ENCODE measurements at regions of chr14 and their contacts with region 1.

Region 1: DNA sequence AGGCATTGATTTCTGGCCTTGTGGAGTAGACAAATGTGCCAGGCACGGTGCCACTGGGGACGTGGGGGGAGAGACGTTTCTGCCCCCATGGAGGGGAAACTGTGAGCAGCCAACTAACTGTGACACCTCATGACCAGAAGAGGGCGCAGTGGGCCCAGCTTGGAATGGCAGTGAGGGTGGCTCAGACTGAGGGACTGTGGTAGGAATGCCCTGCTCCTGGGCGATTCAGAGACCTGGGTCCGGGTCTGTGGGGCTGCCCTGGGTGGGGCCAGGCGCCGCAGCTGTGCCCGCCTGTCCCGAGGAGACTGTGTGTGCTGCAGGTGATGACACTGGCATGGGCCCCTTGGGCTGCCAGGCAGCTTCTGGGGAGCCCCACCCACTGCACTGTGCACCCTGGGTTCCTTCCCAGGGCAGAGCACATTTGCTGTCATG is 60.6 kb downstream of the SLC25A47 start:
- DNase-seq: peak; percentile 55
- ATAC-seq: peak; percentile 77
- H3K4me3 ChIP-seq: no peak overlapping the region
- H3K27ac ChIP-seq: no peak overlapping the region
- H3K4me1 ChIP-seq: peaks cover 26% of the 10 kb centered on the region
- H3K27me3 ChIP-seq: no peaks in the 10 kb centered on the region
- CTCF ChIP-seq: peak; percentile 79
- POLR2A ChIP-seq: no peak
- RAD21 ChIP-seq: peak; percentile 82

Region 2: GRCh38 chr14:100221533-100222223 is 162.1 kb before region 1 on chr14:
- CTCF ChIA-PET with region 1: no interaction called
- POLR2A ChIA-PET with region 1: no interaction called
- dilution Hi-C with region 1: no loop called
- in situ Hi-C with region 1: no loop called
- intact Hi-C with region 1: no loop called
- DNase-seq: peak; percentile 62
- ATAC-seq: peak; percentile 88
- H3K4me3 ChIP-seq: peak overlapping the region; percentile 57
- H3K27ac ChIP-seq: peak overlapping the region; percentile 59
- H3K4me1 ChIP-seq: peaks cover 18% of the 10 kb centered on the region
- H3K27me3 ChIP-seq: no peaks in the 10 kb centered on the region
- CTCF ChIP-seq: no peak
- POLR2A ChIP-seq: no peak
- RAD21 ChIP-seq: no peak

Region 3: GRCh38 chr14:100436745-100437406 is 53.1 kb after region 1 on chr14:
- CTCF ChIA-PET with region 1: no interaction called
- POLR2A ChIA-PET with region 1: no interaction called
- dilution Hi-C with region 1: no loop called
- in situ Hi-C with region 1: no loop called
- intact Hi-C with region 1: no loop called
- DNase-seq: no peak
- ATAC-seq: no peak
- H3K4me3 ChIP-seq: no peak overlapping the region
- H3K27ac ChIP-seq: no peak overlapping the region
- H3K4me1 ChIP-seq: peaks cover 23% of the 10 kb centered on the region
- H3K27me3 ChIP-seq: no peaks in the 10 kb centered on the region
- CTCF ChIP-seq: no peak
- POLR2A ChIP-seq: no peak
- RAD21 ChIP-seq: no peak

Region 4: DNA sequence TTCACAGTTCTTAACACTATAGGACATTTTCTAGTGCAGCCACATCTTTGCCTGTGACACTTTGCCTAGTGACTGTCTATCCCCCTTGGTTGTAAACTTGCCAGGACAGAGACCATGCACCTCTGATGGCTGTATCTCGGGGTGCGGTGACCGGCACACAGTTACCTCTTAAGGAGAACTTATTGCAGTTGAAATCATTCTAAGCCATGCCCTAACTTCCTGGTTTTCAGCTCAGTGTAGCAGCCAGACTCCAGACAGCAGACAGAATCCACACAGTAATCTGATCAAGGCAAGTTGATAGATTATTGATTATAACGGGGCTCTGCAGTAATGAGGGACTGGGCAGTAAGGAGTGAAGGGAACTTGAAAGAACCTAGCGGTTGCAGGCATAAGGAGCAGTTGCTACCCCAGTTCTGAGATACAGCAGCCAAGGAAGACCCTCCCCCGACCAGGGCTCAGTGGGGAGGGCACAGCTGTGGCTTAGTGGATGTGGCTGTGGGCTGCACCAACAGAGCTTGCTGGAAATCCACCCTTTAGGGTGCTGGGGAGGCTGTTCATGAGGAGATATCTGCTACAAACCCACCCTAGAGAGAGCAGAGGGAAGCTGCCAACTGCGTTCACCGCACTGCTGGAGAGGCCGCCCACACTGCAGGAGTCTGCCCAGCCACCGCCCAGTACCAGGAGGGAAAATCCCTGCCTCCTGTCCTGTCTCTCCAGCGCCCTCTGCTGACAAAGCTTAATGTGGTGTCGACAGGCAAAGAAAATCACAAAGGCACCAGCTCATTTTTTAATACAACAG is 261.6 kb after region 1 on chr14:
- CTCF ChIA-PET with region 1: interaction called, 26 read pairs
- POLR2A ChIA-PET with region 1: no interaction called
- dilution Hi-C with region 1: no loop called
- in situ Hi-C with region 1: no loop called
- intact Hi-C with region 1: loop called (anchors 1 kb)
- DNase-seq: peak; percentile 76
- ATAC-seq: peak; percentile 83
- H3K4me3 ChIP-seq: no peak overlapping the region
- H3K27ac ChIP-seq: no peak overlapping the region
- H3K4me1 ChIP-seq: peaks cover 8% of the 10 kb centered on the region; the same call in 1 of the 2 replicates
- H3K27me3 ChIP-seq: peaks cover 18% of the 10 kb centered on the region
- CTCF ChIP-seq: peak; percentile 82
- POLR2A ChIP-seq: no peak
- RAD21 ChIP-seq: peak; percentile 77

Region 5: GRCh38 chr14:100842799-100843198 is 459.1 kb after region 1 on chr14:
- CTCF ChIA-PET with region 1: interaction called, 3 read pairs
- POLR2A ChIA-PET with region 1: no interaction called
- dilution Hi-C with region 1: no loop called
- in situ Hi-C with region 1: loop called (anchors 10 kb)
- intact Hi-C with region 1: no loop called
- DNase-seq: peak; percentile 95
- ATAC-seq: peak; percentile 77
- H3K4me3 ChIP-seq: no peak overlapping the region
- H3K27ac ChIP-seq: peak overlapping the region; percentile 72; the same call in 1 of the 2 replicates
- H3K4me1 ChIP-seq: peaks cover 21% of the 10 kb centered on the region
- H3K27me3 ChIP-seq: no peaks in the 10 kb centered on the region
- CTCF ChIP-seq: no peak
- POLR2A ChIP-seq: no peak
- RAD21 ChIP-seq: peak; percentile 10; the same call in 1 of the 2 replicates

Region 6: GRCh38 chr14:101254805-101255764 is 871.3 kb after region 1 on chr14:
- CTCF ChIA-PET with region 1: no interaction called
- POLR2A ChIA-PET with region 1: no interaction called
- dilution Hi-C with region 1: no loop called
- in situ Hi-C with region 1: no loop called
- intact Hi-C with region 1: no loop called
- DNase-seq: no peak
- ATAC-seq: no peak
- H3K4me3 ChIP-seq: no peak overlapping the region
- H3K27ac ChIP-seq: no peak overlapping the region
- H3K4me1 ChIP-seq: no peaks in the 10 kb centered on the region
- H3K27me3 ChIP-seq: peaks cover 35% of the 10 kb centered on the region
- CTCF ChIP-seq: no peak
- POLR2A ChIP-seq: no peak
- RAD21 ChIP-seq: no peak

Region 7: GRCh38 chr14:101616202-101616601 is 1232.5 kb after region 1 on chr14:
- CTCF ChIA-PET with region 1: no interaction called
- POLR2A ChIA-PET with region 1: interaction called, 12 read pairs
- dilution Hi-C with region 1: no loop called
- in situ Hi-C with region 1: loop called (anchors 10 kb)
- intact Hi-C with region 1: no loop called
- DNase-seq: no peak
- ATAC-seq: no peak
- H3K4me3 ChIP-seq: no peak overlapping the region
- H3K27ac ChIP-seq: no peak overlapping the region
- H3K4me1 ChIP-seq: no peaks in the 10 kb centered on the region
- H3K27me3 ChIP-seq: peaks cover 18% of the 10 kb centered on the region
- CTCF ChIP-seq: no peak
- POLR2A ChIP-seq: no peak
- RAD21 ChIP-seq: no peak